ENCODE measurements at regions of chr1 and their contacts with region 1.

Region 1: GRCh38 chr1:54950369-54951163 is 29.9 kb upstream of the TMEM61 start:
- DNase-seq: peak; percentile 63
- H3K4me3 ChIP-seq: peak overlapping the region; percentile 20; the same call in 1 of the 2 replicates
- CTCF ChIP-seq: peak; percentile 72

Region 2: GRCh38 chr1:54791880-54792522 is 158.6 kb before region 1 on chr1:
- CTCF ChIA-PET with region 1: no interaction called
- POLR2A ChIA-PET with region 1: no interaction called
- DNase-seq: no peak
- H3K4me3 ChIP-seq: no peak overlapping the region
- CTCF ChIP-seq: peak; percentile 22

Region 3: DNA sequence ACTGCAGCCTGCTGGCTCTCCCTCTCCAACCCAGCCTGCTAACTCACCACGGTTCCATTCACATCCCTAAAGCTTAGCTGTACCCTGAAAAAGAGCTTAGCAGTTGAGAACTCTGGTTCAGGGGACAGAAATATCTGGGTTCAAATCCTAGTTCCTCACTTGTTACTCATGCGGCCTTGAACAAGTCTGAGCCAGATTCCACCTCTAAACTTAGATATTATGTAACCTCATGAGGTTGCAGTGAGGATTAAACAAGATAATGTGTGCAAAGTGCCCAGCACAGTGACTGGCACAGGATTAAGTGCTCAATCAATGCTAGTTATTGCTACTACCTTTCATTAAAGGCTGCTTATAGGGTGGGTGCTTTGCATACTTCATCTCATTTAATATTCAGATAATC is 22.2 kb before region 1 on chr1:
- CTCF ChIA-PET with region 1: interaction called, 40 read pairs
- POLR2A ChIA-PET with region 1: no interaction called
- DNase-seq: no peak
- H3K4me3 ChIP-seq: no peak overlapping the region
- CTCF ChIP-seq: no peak

Region 4: GRCh38 chr1:54934869-54935268 is 15.7 kb before region 1 on chr1:
- CTCF ChIA-PET with region 1: interaction called, 85 read pairs
- POLR2A ChIA-PET with region 1: no interaction called
- DNase-seq: peak; percentile 94
- H3K4me3 ChIP-seq: no peak overlapping the region
- CTCF ChIP-seq: no peak

Region 5: DNA sequence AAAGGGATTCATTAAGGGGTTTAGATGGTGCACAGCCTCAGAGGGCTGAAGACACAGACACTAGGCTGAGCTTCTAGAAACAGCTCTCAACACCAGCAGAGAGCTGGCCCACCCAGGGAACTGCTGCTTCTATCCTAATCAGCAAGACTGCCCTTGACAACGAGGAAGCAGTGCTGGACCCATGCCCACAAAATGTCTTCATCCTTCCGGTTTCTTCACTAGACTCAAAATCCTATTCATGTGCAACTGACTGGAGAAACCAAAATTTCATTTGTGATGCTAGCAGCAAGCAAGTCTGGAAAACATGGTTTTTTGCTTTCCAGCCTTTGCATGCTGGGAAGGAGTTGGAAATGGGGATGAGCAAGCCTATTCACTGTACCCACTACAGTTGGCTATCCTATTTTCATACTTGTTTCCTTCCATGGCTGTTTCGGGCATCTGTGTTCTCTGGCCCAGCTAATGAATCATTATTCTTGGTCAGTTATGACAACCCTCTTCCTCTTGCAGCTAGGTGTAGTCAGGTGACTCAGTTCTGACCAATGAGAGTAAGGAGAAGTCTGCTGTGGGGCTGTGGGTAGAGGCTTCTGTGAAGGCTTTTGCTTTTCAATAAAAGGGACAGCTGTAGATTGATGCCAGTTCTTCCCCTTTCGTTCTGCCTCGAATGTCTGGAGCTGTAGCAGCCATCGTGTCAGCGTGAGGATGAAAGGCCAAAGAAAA is 15.2 kb after region 1 on chr1:
- CTCF ChIA-PET with region 1: interaction called, 59 read pairs
- POLR2A ChIA-PET with region 1: no interaction called
- DNase-seq: no peak
- H3K4me3 ChIP-seq: no peak overlapping the region
- CTCF ChIP-seq: no peak

Region 6: GRCh38 chr1:54973205-54973921 is 22.8 kb after region 1 on chr1:
- CTCF ChIA-PET with region 1: interaction called, 37 read pairs
- POLR2A ChIA-PET with region 1: no interaction called
- DNase-seq: no peak
- H3K4me3 ChIP-seq: no peak overlapping the region
- CTCF ChIP-seq: peak; percentile 53

Region 7: DNA sequence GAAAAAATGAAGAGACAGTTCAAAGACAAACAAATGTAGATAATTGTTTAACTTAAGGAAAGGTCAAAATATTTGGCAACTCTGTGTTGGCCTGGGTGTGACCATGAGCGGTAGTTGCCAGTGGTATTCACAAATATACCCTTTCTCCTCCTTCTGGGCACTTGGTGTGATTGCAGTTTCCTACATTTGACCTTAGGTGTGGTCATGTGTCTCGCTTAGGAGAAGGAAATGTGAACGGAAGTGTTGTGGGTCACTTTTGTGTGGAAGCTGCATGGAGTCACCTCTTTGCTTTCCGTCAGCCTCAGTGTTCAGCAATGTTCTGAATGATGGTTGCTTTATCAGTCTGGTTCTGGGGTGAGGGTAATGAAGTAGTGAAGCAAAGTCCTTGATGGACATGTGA is 85.3 kb after region 1 on chr1:
- CTCF ChIA-PET with region 1: interaction called, 29 read pairs
- POLR2A ChIA-PET with region 1: no interaction called
- DNase-seq: no peak
- H3K4me3 ChIP-seq: no peak overlapping the region
- CTCF ChIP-seq: no peak